Testis (tissue), 5 donors: ENCODE measurements at regions of chr6 and their contacts with region 1.

Region 1: GRCh38 chr6:79713701-79714322 is 82.7 kb downstream of the SH3BGRL2 start:
- DNase-seq: peak; percentile 63
- H3K4me3 ChIP-seq: no peak overlapping the region
- H3K27ac ChIP-seq: no peak overlapping the region
- H3K4me1 ChIP-seq: no peaks in the 10 kb centered on the region
- H3K27me3 ChIP-seq: no peaks in the 10 kb centered on the region
- CTCF ChIP-seq: peak; percentile 33 to 60 (median 45)
- POLR2A ChIP-seq: no peak

Region 2: GRCh38 chr6:79570129-79571029 is 143.4 kb before region 1 on chr6:
- intact Hi-C with region 1: loop called (anchors 10 kb)
- DNase-seq: no peak
- H3K4me3 ChIP-seq: no peak overlapping the region
- H3K27ac ChIP-seq: no peak overlapping the region
- H3K4me1 ChIP-seq: peaks cover 3% of the 10 kb centered on the region
- H3K27me3 ChIP-seq: no peaks in the 10 kb centered on the region
- CTCF ChIP-seq: peak; percentile 36 to 67 (median 56)
- POLR2A ChIP-seq: no peak